ENCODE measurements at regions of chr11 and their contacts with region 1.

Region 1: GRCh38 chr11:72430741-72431570 is 3.4 kb downstream of the CLPB start:
- DNase-seq: no peak
- H3K4me3 ChIP-seq: no peak overlapping the region
- H3K27me3 ChIP-seq: no peaks in the 10 kb centered on the region
- CTCF ChIP-seq: peak; percentile 85

Region 2: GRCh38 chr11:72189461-72190275 is 241.3 kb before region 1 on chr11:
- CTCF ChIA-PET with region 1: interaction called, 19 read pairs
- POLR2A ChIA-PET with region 1: no interaction called
- DNase-seq: no peak
- H3K4me3 ChIP-seq: no peak overlapping the region
- H3K27me3 ChIP-seq: no peaks in the 10 kb centered on the region
- CTCF ChIP-seq: no peak

Region 3: GRCh38 chr11:72238040-72238450 is 192.9 kb before region 1 on chr11:
- CTCF ChIA-PET with region 1: interaction called, 14 read pairs
- POLR2A ChIA-PET with region 1: no interaction called
- DNase-seq: no peak
- H3K4me3 ChIP-seq: no peak overlapping the region
- H3K27me3 ChIP-seq: peaks cover 11% of the 10 kb centered on the region
- CTCF ChIP-seq: peak; percentile 81

Region 4: GRCh38 chr11:72405009-72405408 is 25.9 kb before region 1 on chr11:
- CTCF ChIA-PET with region 1: interaction called, 19 read pairs
- POLR2A ChIA-PET with region 1: no interaction called
- DNase-seq: no peak
- H3K4me3 ChIP-seq: no peak overlapping the region
- H3K27me3 ChIP-seq: no peaks in the 10 kb centered on the region
- CTCF ChIP-seq: no peak

Region 5: GRCh38 chr11:72413914-72414628 is 16.9 kb before region 1 on chr11:
- CTCF ChIA-PET with region 1: interaction called, 75 read pairs
- POLR2A ChIA-PET with region 1: no interaction called
- DNase-seq: no peak
- H3K4me3 ChIP-seq: no peak overlapping the region
- H3K27me3 ChIP-seq: no peaks in the 10 kb centered on the region
- CTCF ChIP-seq: peak; percentile 91

Region 6: DNA sequence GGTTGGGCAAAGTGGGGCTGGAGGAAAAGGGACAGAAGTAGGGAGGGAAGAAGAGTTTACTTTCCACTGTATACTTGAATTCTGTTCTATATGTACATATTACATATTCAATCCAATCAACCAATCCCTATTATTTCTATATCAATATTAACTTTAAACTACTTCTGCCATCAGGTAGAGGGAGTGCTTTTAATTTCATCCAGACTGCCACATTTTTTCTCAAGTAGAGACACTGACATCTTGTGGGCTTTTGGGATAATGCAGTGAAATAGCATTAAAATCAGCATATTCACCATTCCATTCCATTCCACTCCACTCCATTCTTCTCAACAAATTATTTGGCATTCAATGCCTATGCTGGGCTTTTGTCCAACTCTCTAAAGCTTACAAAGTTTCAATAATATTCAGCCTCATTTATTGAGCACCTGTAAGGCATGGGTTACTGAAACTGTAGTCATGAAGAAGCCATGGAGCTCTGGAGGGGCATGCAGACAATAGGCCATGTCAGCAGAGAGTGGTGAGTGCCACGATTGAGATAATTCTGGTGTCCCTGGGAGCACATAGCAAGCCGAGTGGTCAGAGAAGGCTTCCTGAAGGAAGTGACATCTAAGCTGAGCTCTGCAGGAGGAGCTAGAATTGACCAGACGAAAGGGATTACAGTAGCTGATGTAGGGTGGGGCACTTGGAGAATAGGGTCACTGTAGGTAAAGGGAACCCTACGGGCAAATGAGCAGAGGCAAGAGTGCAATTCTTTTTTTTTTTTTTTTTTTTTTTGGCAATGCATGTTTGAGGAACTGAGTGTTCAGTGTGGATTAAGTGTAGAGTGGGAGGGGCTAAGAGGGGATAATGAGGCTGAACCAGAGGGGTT is 16.2 kb after region 1 on chr11:
- CTCF ChIA-PET with region 1: interaction called, 19 read pairs
- POLR2A ChIA-PET with region 1: no interaction called
- DNase-seq: no peak
- H3K4me3 ChIP-seq: no peak overlapping the region
- H3K27me3 ChIP-seq: peaks cover 7% of the 10 kb centered on the region; the same call in 1 of the 2 replicates
- CTCF ChIP-seq: peak; percentile 82

Region 7: DNA sequence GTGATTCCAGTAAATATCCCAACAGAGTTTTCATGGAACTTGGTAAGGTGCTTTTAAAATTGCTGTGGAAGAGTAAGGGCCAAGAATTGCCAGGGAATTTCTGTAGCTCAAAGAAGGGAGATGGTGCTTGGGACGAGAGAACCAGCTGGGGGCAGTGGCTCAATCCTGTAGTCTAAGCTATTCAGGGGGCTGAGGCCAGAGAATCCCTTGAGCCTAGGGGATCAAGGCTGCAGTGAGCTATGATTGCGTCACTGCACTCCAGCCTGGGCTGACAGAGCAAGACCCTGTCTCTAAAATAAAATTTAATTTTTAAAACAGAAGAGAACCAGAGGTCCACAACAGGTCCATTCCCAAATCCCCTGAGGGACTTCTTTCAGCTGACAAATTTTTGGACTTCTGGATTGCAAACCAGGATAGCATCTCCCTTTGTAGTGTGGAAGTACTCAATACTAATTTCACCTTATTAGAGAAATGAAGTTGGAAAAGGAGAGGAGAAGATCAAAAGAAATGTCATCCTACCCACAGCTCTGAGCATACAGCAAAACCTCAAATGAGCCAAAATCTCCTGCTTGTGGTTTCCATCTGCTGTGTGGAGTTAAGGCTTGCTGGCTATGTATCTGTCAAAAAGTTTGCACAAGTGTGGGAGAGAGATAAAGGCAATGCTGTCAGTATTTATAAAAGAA is 62.6 kb after region 1 on chr11:
- CTCF ChIA-PET with region 1: no interaction called
- POLR2A ChIA-PET with region 1: no interaction called
- DNase-seq: no peak
- H3K4me3 ChIP-seq: no peak overlapping the region
- H3K27me3 ChIP-seq: no peaks in the 10 kb centered on the region
- CTCF ChIP-seq: no peak